ENCODE measurements at regions of chr16 and their contacts with region 1.

Region 1: DNA sequence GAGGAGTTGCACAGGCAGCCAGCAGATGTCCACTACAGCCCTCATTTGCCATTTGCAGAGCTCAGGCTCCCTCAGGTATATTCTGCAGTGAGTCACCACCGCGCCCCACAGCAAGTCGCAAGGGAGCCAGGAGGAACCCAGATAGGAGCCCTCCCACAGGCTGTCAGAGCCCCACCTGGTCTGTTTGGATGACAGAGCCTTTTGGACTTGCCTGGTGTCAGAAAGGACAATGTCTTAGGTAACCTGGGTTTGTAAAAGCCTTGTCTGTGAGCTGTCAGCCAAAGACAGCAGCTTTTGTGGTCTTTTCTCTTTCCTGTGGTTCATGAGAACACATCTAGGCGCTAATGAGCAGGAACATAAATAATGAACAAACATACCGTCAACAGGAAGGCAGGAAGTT is 70.9 kb downstream of the GNAO1 start:
- DNase-seq: peak; percentile 2 to 82 (median 49)
- H3K4me3 ChIP-seq: peak overlapping the region; percentile 47
- H3K4me3 Mint-ChIP-seq: peak overlapping the region; percentile 21 to 89 (median 68)
- H3K27ac ChIP-seq: peak overlapping the region; percentile 70
- H3K27ac Mint-ChIP-seq: peak overlapping the region; percentile 82 to 96 (median 93)
- H3K4me1 ChIP-seq: peaks cover 45% of the 10 kb centered on the region
- H3K4me1 Mint-ChIP-seq: peaks cover 52 to 78% (median 76%) of the 10 kb centered on the region in 3 donors
- H3K27me3 ChIP-seq: no peaks in the 10 kb centered on the region
- H3K27me3 Mint-ChIP-seq: no peaks in the 10 kb centered on the region

Region 2: GRCh38 chr16:55746081-55746480 is 516.1 kb before region 1 on chr16:
- CTCF ChIA-PET with region 1: no interaction called
- POLR2A ChIA-PET with region 1: no interaction called
- DNase-seq: no peak
- H3K4me3 ChIP-seq: no peak overlapping the region
- H3K4me3 Mint-ChIP-seq: no peak overlapping the region
- H3K27ac ChIP-seq: no peak overlapping the region
- H3K27ac Mint-ChIP-seq: no peak overlapping the region
- H3K4me1 ChIP-seq: no peaks in the 10 kb centered on the region
- H3K4me1 Mint-ChIP-seq: no peaks in the 10 kb centered on the region
- H3K27me3 ChIP-seq: no peaks in the 10 kb centered on the region
- H3K27me3 Mint-ChIP-seq: peaks cover 15 to 49% of the 10 kb centered on the region in 2 donors

Region 3: DNA sequence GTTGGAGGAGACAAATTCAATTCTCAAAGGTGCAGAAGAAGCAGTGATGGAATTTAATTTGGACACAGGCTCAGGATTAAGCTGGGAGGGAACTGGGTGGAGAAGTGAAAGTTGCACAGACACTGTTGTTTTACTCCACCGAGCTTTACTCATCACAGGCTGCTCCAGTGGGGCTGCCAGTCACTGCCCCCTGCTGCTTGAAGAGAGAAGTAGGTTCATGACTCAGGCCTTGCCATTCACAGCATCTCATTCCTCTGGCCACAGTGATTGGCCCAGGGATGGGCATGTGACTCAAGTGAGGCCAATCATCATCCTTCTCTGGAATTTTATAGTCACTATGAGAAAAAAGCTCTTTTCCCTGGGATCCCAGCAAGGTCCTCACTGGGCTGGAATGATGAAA is 59.1 kb before region 1 on chr16:
- CTCF ChIA-PET with region 1: interaction called, 10 read pairs
- POLR2A ChIA-PET with region 1: no interaction called
- DNase-seq: peak in 3 of 5 donors; percentile 20 to 71 (median 62)
- H3K4me3 ChIP-seq: no peak overlapping the region
- H3K4me3 Mint-ChIP-seq: no peak overlapping the region
- H3K27ac ChIP-seq: no peak overlapping the region
- H3K27ac Mint-ChIP-seq: no peak overlapping the region
- H3K4me1 ChIP-seq: peaks cover 52% of the 10 kb centered on the region
- H3K4me1 Mint-ChIP-seq: peaks cover 0 to 5% (median 0%) of the 10 kb centered on the region in 3 donors
- H3K27me3 ChIP-seq: no peaks in the 10 kb centered on the region
- H3K27me3 Mint-ChIP-seq: no peaks in the 10 kb centered on the region

Region 4: DNA sequence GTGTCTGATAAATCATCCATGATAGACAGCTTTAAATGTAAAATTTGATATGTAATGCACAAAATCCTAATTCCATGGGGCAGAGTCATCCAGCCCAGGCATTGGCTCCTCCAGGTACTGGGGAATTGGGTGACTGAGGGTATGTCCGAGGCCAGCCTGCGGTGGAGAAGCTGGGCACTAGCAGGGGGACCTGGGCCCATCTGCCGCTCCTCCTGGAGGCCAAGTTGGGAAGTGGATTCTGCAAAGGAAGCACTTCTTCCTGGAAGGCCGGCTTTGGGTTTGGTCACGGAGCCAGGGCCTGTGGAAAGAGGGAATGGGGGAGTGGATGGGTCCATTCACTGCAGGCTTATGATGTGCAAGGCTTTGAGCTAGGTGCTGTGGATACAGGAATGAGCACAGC is 14.9 kb after region 1 on chr16:
- CTCF ChIA-PET with region 1: interaction called, 12 read pairs
- POLR2A ChIA-PET with region 1: interaction called, 7 read pairs
- DNase-seq: no peak
- H3K4me3 ChIP-seq: no peak overlapping the region
- H3K4me3 Mint-ChIP-seq: peak overlapping the region in 2 of 7 donors; percentile 61 to 71
- H3K27ac ChIP-seq: no peak overlapping the region
- H3K27ac Mint-ChIP-seq: peak overlapping the region in 5 of 8 donors; percentile 12 to 55 (median 28)
- H3K4me1 ChIP-seq: peaks cover 29% of the 10 kb centered on the region
- H3K4me1 Mint-ChIP-seq: peaks cover 40 to 73% (median 40%) of the 10 kb centered on the region in 3 donors
- H3K27me3 ChIP-seq: no peaks in the 10 kb centered on the region
- H3K27me3 Mint-ChIP-seq: no peaks in the 10 kb centered on the region